Activated CD4-positive, alpha-beta memory T cell treated with anti-CD3 and anti-CD28 coated beads, Interleukin-2, amount 10 ng/mL, durations not matched to agents 7 days and 5 days (primary cell): ENCODE measurements at regions of chr12 and their contacts with region 1.

Region 1: GRCh38 chr12:104286538-104287482 is 16.7 kb upstream of the EID3 start:
- DNase-seq: peak; percentile 94
- H3K4me3 Mint-ChIP-seq: peak overlapping the region; percentile 97
- H3K27ac Mint-ChIP-seq: peak overlapping the region; percentile 99
- H3K4me1 Mint-ChIP-seq: peaks cover 26% of the 10 kb centered on the region
- H3K27me3 Mint-ChIP-seq: no peaks in the 10 kb centered on the region

Region 2: DNA sequence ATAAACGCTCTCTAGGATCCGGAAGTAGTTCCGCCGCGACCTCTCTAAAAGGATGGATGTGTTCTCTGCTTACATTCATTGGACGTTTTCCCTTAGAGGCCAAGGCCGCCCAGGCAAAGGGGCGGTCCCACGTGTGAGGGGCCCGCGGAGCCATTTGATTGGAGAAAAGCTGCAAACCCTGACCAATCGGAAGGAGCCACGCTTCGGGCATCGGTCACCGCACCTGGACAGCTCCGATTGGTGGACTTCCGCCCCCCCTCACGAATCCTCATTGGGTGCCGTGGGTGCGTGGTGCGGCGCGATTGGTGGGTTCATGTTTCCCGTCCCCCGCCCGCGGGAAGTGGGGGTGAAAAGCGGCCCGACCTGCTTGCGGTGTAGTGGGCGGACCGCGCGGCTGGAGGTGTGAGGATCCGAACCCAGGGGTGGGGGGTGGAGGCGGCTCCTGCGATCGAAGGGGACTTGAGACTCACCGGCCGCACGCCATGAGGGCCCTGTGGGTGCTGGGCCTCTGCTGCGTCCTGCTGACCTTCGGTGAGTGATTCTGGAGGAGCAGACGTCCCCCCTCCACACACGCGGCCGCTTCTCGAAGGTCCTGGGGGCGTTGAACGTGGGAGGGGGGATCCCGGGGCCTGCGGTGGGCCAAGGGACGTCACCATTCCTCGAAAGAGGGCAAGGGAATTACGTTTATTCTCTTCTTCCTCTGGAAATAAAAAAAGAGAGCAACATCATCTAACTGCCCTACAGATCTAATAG is 356.6 kb before region 1 on chr12 and contains the start of gene HSP90B1:
- CTCF ChIA-PET with region 1: no interaction called
- POLR2A ChIA-PET with region 1: interaction called, 20 read pairs
- DNase-seq: peak; percentile 100
- H3K4me3 Mint-ChIP-seq: peak within 1 kb of the TSS; percentile 83
- H3K27ac Mint-ChIP-seq: peak within 1 kb of the TSS; percentile 100
- H3K4me1 Mint-ChIP-seq: peaks cover 61% of the 10 kb centered on the region
- H3K27me3 Mint-ChIP-seq: no peaks in the 10 kb centered on the region
- total RNA-seq, gene HSP90B1: 375 to 378 TPM

Region 3: GRCh38 chr12:103986829-103987228 is 300.0 kb before region 1 on chr12:
- CTCF ChIA-PET with region 1: no interaction called
- POLR2A ChIA-PET with region 1: no interaction called
- DNase-seq: no peak
- H3K4me3 Mint-ChIP-seq: no peak overlapping the region
- H3K27ac Mint-ChIP-seq: no peak overlapping the region
- H3K4me1 Mint-ChIP-seq: no peaks in the 10 kb centered on the region
- H3K27me3 Mint-ChIP-seq: no peaks in the 10 kb centered on the region

Region 4: GRCh38 chr12:104115587-104115975 is 171.2 kb before region 1 on chr12:
- CTCF ChIA-PET with region 1: no interaction called
- POLR2A ChIA-PET with region 1: no interaction called
- DNase-seq: no peak
- H3K4me3 Mint-ChIP-seq: no peak overlapping the region
- H3K27ac Mint-ChIP-seq: no peak overlapping the region
- H3K4me1 Mint-ChIP-seq: no peaks in the 10 kb centered on the region
- H3K27me3 Mint-ChIP-seq: no peaks in the 10 kb centered on the region

Region 5: DNA sequence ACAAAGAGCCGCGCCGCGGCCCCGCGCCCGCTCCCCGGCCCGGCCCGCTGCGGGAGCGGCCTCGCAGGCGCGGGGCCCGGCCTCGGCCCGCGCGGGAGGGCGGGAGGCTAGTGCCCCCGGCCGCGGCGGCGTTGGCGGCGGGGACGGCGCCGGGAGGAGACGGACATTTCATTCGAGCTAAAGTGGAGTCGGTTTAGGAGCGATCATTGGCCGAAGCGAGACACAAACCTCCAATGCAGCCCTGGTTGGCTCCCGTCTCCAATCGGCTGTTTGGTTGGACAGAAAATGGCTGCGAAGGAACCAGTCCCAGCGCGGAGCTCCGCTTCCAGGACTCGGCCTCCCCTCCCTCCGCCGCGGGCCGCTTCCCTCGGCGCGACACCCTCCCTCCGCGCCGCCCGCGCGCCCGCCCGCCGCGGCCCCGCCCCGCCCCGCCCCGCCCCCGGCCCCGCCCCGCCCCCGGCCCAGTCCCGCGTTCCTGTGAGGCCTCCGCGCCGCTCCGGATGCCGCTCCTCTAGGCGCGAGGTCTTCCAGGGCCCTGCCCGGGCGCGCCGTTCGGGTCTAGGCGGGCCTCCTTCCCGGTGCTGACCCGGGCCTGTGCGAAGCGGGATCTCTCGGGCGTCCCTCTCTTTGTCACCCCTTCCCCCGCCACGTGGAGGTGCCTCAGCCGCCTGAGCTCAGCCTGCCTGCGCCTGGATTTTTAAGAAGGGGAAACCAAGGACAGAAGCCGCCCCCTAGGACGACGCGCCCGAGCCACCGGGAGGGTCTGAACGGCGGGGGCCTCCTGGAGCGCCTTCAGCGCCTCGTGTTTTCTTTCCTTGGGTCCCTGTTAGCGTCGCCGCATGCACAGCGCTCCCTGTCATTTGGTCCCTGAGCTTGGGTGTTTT is 148.7 kb before region 1 on chr12 and contains the start of gene NFYB:
- CTCF ChIA-PET with region 1: interaction called, 6 read pairs
- POLR2A ChIA-PET with region 1: interaction called, 52 read pairs
- DNase-seq: peak; percentile 94
- H3K4me3 Mint-ChIP-seq: peak within 1 kb of the TSS; percentile 88
- H3K27ac Mint-ChIP-seq: peak within 1 kb of the TSS; percentile 86
- H3K4me1 Mint-ChIP-seq: peaks cover 23% of the 10 kb centered on the region
- H3K27me3 Mint-ChIP-seq: peaks cover 18% of the 10 kb centered on the region
- total RNA-seq, gene NFYB: 22.3 to 22.7 TPM

Region 6: DNA sequence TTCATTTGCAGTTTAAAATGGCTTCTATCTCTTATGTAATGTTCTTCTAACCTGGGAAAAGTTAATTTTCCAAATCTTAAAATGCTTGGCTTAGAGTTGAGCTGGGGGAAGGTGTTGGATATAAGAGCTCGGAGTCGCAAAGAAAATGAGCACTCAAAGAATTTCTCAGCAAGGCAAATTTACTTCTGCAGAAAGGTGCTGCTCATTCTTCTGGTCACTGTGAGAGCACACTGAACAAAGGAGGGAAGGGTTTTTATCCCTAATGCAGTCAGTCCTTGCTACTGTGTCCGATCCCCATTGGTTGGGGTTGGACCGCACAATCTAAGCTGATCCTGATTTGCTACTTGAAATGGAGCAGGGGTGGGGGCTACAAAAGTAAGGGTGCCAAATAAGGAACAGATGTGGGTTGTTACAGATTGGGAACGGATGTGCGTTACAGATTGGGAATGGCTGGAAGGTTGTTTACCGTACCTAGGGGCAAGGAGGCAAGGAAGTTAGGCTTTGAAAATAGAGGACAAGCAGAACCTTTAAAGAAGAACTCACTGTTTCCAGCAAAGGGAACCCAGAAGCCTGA is 51.8 kb before region 1 on chr12:
- CTCF ChIA-PET with region 1: no interaction called
- POLR2A ChIA-PET with region 1: no interaction called
- DNase-seq: no peak
- H3K4me3 Mint-ChIP-seq: no peak overlapping the region
- H3K27ac Mint-ChIP-seq: no peak overlapping the region
- H3K4me1 Mint-ChIP-seq: no peaks in the 10 kb centered on the region
- H3K27me3 Mint-ChIP-seq: peaks cover 8% of the 10 kb centered on the region

Region 7: GRCh38 chr12:104258476-104259067 is 28.2 kb before region 1 on chr12:
- CTCF ChIA-PET with region 1: interaction called, 14 read pairs
- POLR2A ChIA-PET with region 1: interaction called, 5 read pairs
- DNase-seq: no peak
- H3K4me3 Mint-ChIP-seq: no peak overlapping the region
- H3K27ac Mint-ChIP-seq: no peak overlapping the region
- H3K4me1 Mint-ChIP-seq: no peaks in the 10 kb centered on the region
- H3K27me3 Mint-ChIP-seq: peaks cover 8% of the 10 kb centered on the region

Region 8: GRCh38 chr12:104303538-104304151 is 16.8 kb after region 1 on chr12 and contains the start of gene EID3:
- CTCF ChIA-PET with region 1: interaction called, 34 read pairs
- POLR2A ChIA-PET with region 1: interaction called, 151 read pairs
- DNase-seq: peak; percentile 92
- H3K4me3 Mint-ChIP-seq: peak within 1 kb of the TSS; percentile 83
- H3K27ac Mint-ChIP-seq: peak within 1 kb of the TSS; percentile 94
- H3K4me1 Mint-ChIP-seq: peaks cover 71% of the 10 kb centered on the region
- H3K27me3 Mint-ChIP-seq: no peaks in the 10 kb centered on the region
- total RNA-seq, gene EID3: 3.4 to 4.2 TPM

Region 9: GRCh38 chr12:104374806-104375205 is 88.0 kb after region 1 on chr12:
- CTCF ChIA-PET with region 1: no interaction called
- POLR2A ChIA-PET with region 1: no interaction called
- DNase-seq: no peak
- H3K4me3 Mint-ChIP-seq: no peak overlapping the region
- H3K27ac Mint-ChIP-seq: no peak overlapping the region
- H3K4me1 Mint-ChIP-seq: peaks cover 17% of the 10 kb centered on the region
- H3K27me3 Mint-ChIP-seq: no peaks in the 10 kb centered on the region

Region 10: DNA sequence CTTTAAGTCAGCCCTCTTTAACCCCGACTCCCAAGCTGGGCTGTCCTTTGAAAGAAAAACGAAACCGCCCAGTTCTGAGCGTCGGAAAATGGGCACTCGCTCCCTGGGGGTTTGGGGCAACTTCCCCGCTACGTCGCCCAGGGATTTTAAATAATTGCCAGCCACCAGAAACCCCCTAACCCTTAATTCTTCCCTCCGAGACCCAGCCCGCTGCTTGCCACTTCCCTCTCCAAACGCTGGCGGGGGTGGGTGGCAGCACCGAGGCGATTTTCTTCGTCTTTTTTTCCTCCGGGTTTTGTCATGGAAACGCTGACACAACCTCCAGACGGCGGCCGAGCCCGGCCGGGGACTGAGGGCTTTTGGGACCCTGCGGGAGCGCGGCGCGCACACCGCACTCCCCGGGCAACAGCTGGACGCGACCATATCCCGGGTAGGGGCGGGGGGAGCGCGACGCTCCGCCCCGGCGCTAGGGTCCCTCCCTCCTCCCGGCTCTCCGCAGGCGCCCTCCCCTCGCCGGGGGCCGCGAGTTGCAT is 169.7 kb after region 1 on chr12 and contains the start of gene CHST11:
- CTCF ChIA-PET with region 1: no interaction called
- POLR2A ChIA-PET with region 1: interaction called, 15 read pairs
- DNase-seq: peak; percentile 84
- H3K4me3 Mint-ChIP-seq: peak within 1 kb of the TSS; percentile 99
- H3K27ac Mint-ChIP-seq: peak within 1 kb of the TSS; percentile 94
- H3K4me1 Mint-ChIP-seq: peaks cover 29% of the 10 kb centered on the region
- H3K27me3 Mint-ChIP-seq: peaks cover 4% of the 10 kb centered on the region
- total RNA-seq, gene CHST11: 124 to 125 TPM